Cardiac septum (tissue), 1 donor: ENCODE measurements at regions of chr1 and their contacts with region 1.

Region 1: GRCh38 chr1:231872461-231872910 is 245.9 kb downstream of the DISC1 start:
- DNase-seq: no peak

Region 2: GRCh38 chr1:232142403-232143314 is 270.2 kb after region 1 on chr1:
- intact Hi-C with region 1: loop called (anchors 10 kb)
- DNase-seq: peak; percentile 76